Testis (tissue), 5 donors: ENCODE measurements at regions of chr9 and their contacts with region 1.

Region 1: GRCh38 chr9:68999393-69000105 is 14.4 kb downstream of the PRKACG start:
- DNase-seq: peak; percentile 76
- H3K4me3 ChIP-seq: no peak overlapping the region
- H3K27ac ChIP-seq: no peak overlapping the region
- H3K4me1 ChIP-seq: no peaks in the 10 kb centered on the region
- H3K27me3 ChIP-seq: no peaks in the 10 kb centered on the region
- CTCF ChIP-seq: peak; percentile 53 to 68 (median 67)
- POLR2A ChIP-seq: no peak

Region 2: DNA sequence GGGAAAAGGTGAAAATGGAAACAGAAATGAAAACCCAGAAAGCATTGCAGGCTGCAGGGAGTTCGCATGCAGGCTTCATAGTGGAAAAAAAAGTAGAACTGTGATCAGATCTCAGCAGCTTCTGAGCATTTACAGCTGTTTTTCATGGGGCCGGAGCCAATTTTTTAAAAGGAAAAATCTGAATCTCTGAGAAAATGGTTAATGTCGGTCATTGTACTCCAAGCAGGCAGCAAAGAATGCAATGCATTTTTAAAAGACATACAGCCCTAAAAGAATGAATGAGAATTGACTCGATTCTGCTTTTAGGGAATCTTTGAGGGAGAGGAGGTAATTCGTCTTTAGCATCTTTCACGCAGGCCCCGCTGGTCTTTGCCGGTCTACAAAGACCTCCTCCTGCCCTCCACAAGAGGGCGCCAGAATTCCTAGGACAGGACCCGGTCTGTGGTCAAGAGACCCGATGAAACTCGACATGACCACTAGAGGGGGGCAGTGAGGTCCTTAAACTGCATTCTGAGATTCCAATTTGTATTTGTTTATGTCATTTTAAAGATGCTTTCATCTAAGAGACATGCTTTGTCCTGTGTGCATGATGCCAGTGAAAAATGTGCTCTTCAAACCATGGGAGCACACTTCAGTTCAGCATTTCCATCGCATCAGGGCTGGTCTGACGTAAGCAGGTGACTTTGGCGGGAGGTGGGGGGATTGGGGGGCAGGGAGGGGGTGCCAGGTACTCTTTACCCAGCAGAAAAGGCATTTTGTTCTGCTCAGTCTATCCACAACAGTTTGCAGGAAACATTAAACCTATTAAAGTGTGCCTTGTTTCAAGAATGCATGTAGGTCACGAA is 415.1 kb before region 1 on chr9:
- intact Hi-C with region 1: loop called (anchors 10 kb)
- DNase-seq: peak; percentile 94
- H3K4me3 ChIP-seq: no peak overlapping the region
- H3K27ac ChIP-seq: no peak overlapping the region
- H3K4me1 ChIP-seq: peaks cover 6% of the 10 kb centered on the region
- H3K27me3 ChIP-seq: no peaks in the 10 kb centered on the region
- CTCF ChIP-seq: peak; percentile 95 to 99 (median 97)
- POLR2A ChIP-seq: no peak

Region 3: GRCh38 chr9:68925175-68925574 is 74.4 kb before region 1 on chr9:
- intact Hi-C with region 1: no loop called
- DNase-seq: no peak
- H3K4me3 ChIP-seq: no peak overlapping the region
- H3K27ac ChIP-seq: no peak overlapping the region
- H3K4me1 ChIP-seq: no peaks in the 10 kb centered on the region
- H3K27me3 ChIP-seq: no peaks in the 10 kb centered on the region
- CTCF ChIP-seq: no peak
- POLR2A ChIP-seq: no peak